ENCODE measurements at regions of chr1 and their contacts with region 1.

Region 1: DNA sequence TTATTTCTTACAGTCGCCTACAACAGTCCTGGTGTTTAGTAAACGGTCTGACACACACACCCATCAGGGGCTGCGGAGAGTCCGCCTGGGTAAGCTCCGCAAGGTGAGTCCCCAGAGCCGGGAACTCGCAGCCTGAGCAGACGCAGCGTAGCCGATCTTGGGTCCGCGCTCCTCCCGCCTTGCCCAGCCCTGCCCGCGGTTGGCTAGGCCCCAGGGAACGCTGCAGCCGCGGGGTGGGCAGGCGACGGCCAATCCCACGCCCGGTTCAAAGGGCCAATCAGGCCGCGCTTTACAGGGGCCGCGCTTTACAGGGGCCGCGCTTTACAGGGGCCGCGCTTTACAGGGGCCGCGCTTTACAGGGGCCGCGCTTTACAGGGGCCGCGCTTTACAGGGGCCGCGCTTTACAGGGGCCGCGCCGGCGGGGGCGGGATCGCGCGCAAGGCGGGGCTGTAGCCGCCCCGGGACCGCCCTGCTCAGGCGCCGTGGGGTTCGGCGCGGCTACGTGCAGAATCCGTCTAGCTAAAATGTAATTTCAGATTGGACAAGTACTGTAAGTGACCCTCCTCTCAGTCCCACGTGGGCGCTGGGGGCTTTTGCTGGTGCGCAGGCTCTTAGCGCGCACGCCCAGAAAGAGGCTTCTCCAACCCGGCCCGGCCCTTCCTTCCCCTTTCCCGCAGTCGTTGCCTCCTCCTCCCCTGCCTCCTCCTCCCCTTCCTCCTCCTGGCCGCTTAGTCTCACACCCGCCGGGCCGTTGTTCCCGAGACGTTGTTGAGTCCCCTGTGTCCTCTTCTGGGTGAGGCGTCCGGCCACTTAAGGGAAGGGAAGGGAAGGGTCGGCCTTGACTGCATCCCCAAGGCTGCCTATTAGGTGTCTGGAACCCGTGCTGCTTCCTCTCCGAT is at the start of gene FGGY:
- DNase-seq: peak; percentile 99
- H3K4me3 ChIP-seq: peak within 1 kb of the TSS; percentile 36 to 81 (median 64)
- H3K27ac ChIP-seq: peak within 1 kb of the TSS; percentile 92
- H3K4me1 ChIP-seq: peaks cover 30% of the 10 kb centered on the region
- H3K27me3 ChIP-seq: no peaks in the 10 kb centered on the region
- CTCF ChIP-seq: no peak
- POLR2A ChIP-seq: peak; percentile 95
- total RNA-seq, gene FGGY: 5.6 and 8.3 TPM in 2 replicates

Region 2: DNA sequence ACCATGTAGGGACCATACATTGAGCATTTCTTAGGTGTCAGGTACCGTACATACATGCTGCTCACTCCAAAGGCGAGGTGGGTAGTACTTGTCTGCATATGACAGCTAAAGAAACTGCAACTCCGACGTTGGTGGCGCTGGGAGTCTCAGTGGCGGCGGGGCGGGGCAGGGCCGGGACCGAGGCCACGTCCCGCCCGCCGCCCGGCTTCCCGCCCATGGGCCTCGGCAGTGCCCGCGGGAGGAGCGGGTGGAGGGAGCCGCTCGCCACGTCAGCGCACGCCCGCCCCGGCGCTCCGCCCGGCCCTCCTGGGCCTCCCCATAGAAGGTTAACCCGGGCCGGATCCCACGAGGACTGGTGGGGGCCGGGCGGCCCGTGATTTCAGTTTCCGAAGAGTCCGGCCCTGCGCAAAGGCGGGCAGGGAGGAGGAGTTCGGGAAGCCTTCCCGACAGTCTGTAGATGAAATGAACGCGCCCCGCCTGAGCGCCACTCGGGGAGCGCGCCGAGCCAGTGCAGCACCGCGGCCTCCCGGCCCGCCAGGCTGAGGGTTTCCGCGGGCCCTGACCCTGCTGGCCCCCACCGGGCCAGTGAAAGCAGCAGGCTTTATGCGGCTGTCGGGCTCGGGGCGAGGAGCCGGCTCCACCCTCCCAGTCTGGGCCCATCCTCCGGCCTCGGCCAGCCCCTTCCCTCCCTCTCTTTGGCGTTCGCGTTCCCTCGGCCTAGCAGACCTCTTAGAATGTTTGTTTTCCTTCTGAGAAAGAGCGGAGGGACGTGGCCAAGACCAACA is 392.9 kb before region 1 on chr1:
- CTCF ChIA-PET with region 1: no interaction called
- POLR2A ChIA-PET with region 1: no interaction called
- dilution Hi-C with region 1: no loop called
- intact Hi-C with region 1: loop called (anchors 2 kb)
- DNase-seq: peak; percentile 94
- H3K4me3 ChIP-seq: peak overlapping the region in 2 of 3 experiments; percentile 24 to 41
- H3K27ac ChIP-seq: peak overlapping the region; percentile 64
- H3K4me1 ChIP-seq: peaks cover 46% of the 10 kb centered on the region
- H3K27me3 ChIP-seq: no peaks in the 10 kb centered on the region
- CTCF ChIP-seq: no peak
- POLR2A ChIP-seq: peak; percentile 95

Region 3: GRCh38 chr1:59061876-59062275 is 234.7 kb before region 1 on chr1:
- CTCF ChIA-PET with region 1: no interaction called
- POLR2A ChIA-PET with region 1: interaction called, 3 read pairs
- dilution Hi-C with region 1: no loop called
- intact Hi-C with region 1: loop called (anchors 5 kb)
- DNase-seq: peak; percentile 94
- H3K4me3 ChIP-seq: peak overlapping the region in 2 of 3 experiments; percentile 1 to 62
- H3K27ac ChIP-seq: peak overlapping the region; percentile 75
- H3K4me1 ChIP-seq: peaks cover 26% of the 10 kb centered on the region
- H3K27me3 ChIP-seq: no peaks in the 10 kb centered on the region
- CTCF ChIP-seq: no peak
- POLR2A ChIP-seq: peak; percentile 47

Region 4: DNA sequence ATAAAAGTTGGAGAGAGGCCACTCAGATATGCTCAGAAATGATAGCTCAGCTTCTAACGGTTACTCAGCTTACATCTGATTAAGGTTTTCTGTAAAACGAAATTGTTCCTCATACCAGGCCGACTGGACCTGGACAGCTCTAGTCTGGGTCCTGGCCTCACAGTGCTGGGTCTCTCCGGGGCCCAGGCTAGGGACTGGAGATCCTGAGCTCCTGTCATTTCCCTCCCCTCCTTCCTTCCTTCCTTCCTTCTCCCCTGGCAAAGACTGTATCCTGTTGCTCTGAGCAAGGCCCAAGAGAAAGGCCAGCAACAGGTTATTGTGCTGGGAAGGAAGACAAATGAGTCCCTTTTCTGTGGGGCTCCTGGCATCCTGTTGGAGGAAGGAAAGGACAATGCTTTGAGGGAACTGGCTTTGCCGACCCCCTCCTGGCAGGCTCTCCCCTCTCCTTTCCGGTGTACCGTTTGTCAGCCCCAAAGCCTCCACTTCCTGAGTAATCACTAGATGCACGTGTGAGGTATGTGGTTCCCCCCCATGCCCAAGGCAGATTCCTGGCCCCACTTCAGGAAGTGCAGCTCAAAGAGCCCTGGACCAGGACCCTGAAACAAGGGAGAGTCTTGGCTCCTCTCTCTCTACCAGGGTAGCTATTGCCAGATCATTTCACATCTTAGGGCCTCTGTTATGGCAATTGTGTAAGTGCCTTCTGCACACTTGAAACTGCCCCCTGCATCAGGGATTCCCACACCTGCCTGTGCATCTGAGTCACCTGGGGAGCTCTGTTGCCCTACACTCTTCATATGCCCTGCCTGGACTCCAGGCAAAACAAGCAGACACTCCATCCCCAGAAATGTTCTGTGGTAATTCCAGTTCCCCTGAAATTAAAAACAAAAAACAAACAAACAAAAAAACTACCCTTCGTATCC is 212.4 kb before region 1 on chr1:
- CTCF ChIA-PET with region 1: interaction called, 3 read pairs
- POLR2A ChIA-PET with region 1: interaction called, 3 read pairs
- dilution Hi-C with region 1: no loop called
- intact Hi-C with region 1: loop called (anchors 1 kb)
- DNase-seq: peak; percentile 67
- H3K4me3 ChIP-seq: no peak overlapping the region
- H3K27ac ChIP-seq: peak overlapping the region; percentile 49
- H3K4me1 ChIP-seq: peaks cover 23% of the 10 kb centered on the region
- H3K27me3 ChIP-seq: no peaks in the 10 kb centered on the region
- CTCF ChIP-seq: no peak
- POLR2A ChIP-seq: peak; percentile 20

Region 5: DNA sequence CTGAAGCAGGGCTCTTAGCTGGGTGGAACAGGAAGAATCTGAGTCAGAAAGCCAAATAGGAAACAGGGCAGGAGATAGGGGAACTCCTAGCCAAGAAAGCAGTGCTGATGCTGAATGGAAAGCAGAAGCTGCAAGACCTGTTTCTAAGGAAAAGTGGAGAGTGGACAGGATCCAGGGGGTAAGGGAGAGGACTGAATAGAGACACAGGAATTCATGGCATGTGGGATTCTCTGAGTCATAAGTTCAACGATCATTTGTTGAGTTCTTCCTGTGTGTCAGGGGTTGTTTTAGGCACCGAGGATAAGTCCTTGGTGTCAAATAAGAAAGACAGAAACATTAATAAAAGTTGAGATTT is 153.5 kb before region 1 on chr1:
- CTCF ChIA-PET with region 1: interaction called, 5 read pairs
- POLR2A ChIA-PET with region 1: no interaction called
- dilution Hi-C with region 1: no loop called
- intact Hi-C with region 1: loop called (anchors 5 kb)
- DNase-seq: peak; percentile 91
- H3K4me3 ChIP-seq: no peak overlapping the region
- H3K27ac ChIP-seq: peak overlapping the region; percentile 82
- H3K4me1 ChIP-seq: peaks cover 43% of the 10 kb centered on the region
- H3K27me3 ChIP-seq: no peaks in the 10 kb centered on the region
- CTCF ChIP-seq: no peak
- POLR2A ChIP-seq: peak; percentile 45

Region 6: DNA sequence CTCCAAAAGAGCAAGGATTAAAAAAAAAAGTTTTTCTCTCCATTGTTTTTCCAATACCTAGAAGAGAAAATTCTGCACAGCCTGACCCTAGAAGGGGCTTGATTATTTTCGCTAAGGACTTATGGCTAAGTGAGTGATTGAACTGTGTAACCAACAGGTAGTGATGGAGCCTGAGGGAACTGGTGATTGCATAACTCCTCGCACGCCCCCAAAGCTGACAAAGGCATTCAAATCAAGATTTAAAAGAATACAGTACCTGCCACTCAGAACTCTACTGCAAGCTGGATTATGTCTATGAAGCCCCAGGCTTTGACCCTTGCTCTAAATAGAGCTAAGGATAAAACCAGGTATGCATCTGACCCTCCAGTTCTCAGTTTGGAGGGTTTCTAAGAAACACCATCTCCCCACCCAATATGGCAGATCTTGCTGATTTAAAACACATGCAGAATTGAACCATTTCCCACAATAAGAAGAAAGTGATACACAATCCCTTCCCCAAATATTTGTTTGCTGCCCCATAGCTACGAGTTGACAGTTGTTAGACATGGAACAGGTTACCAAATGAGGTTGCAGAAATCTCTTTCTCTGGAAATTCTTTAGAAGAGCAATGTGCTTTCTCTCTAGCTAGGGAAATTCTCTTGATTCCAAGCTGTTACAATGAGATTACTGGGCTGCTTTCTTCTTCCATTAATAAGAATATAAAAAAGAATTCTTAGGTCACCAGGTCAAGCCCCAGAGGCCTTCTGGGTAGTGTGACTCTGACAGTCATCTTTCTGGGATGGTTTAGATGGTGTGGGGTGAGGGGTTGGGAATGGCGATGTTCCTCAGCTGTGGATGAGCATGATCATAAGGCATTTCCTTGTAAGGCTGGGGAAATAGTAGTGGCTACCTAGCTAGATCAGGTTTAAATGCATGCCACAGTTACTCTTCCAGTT is 35.3 kb after region 1 on chr1:
- CTCF ChIA-PET with region 1: no interaction called
- POLR2A ChIA-PET with region 1: no interaction called
- dilution Hi-C with region 1: no loop called
- intact Hi-C with region 1: no loop called
- DNase-seq: no peak
- H3K4me3 ChIP-seq: no peak overlapping the region
- H3K27ac ChIP-seq: no peak overlapping the region
- H3K4me1 ChIP-seq: peaks cover 32% of the 10 kb centered on the region
- H3K27me3 ChIP-seq: no peaks in the 10 kb centered on the region
- CTCF ChIP-seq: no peak
- POLR2A ChIP-seq: no peak

Region 7: GRCh38 chr1:59412718-59413326 is 116.2 kb after region 1 on chr1:
- CTCF ChIA-PET with region 1: no interaction called
- POLR2A ChIA-PET with region 1: no interaction called
- dilution Hi-C with region 1: no loop called
- intact Hi-C with region 1: no loop called
- DNase-seq: no peak
- H3K4me3 ChIP-seq: no peak overlapping the region
- H3K27ac ChIP-seq: no peak overlapping the region
- H3K4me1 ChIP-seq: no peaks in the 10 kb centered on the region
- H3K27me3 ChIP-seq: no peaks in the 10 kb centered on the region
- CTCF ChIP-seq: no peak
- POLR2A ChIP-seq: no peak

Region 8: DNA sequence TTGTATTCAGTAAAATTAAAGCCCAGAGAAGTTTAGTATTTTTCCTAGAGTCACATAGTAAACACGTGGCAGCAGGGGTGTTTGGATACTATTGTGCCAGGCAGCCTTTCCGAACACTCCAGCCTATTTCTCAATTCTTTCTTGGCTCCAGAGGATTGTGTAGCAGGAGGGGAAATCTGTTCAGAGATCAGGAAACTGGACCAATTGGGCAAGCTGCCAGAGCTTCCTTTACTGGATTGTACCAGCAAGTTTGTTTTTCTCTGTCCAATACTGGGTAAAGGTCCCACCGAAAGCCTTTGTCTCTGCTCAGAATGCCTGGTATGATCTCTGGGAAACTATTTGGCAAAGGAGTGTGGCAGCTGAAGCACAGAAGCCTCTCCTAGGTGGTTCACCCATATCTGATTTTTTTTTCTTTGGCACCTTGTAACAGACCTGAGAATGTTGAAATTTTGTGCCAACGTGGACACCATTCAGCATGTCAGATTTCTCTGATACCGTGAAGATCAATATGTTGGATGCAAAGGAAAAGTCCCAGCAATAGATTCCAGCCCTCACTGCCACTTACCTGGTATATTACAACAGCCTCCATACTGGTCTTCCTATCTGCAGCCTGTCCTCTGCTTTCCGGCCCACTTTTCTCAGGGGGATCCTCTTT is 126.4 kb after region 1 on chr1:
- CTCF ChIA-PET with region 1: no interaction called
- POLR2A ChIA-PET with region 1: no interaction called
- dilution Hi-C with region 1: no loop called
- intact Hi-C with region 1: loop called (anchors 2 kb)
- DNase-seq: peak; percentile 97
- H3K4me3 ChIP-seq: no peak overlapping the region
- H3K27ac ChIP-seq: peak overlapping the region; percentile 13
- H3K4me1 ChIP-seq: peaks cover 10% of the 10 kb centered on the region
- H3K27me3 ChIP-seq: no peaks in the 10 kb centered on the region
- CTCF ChIP-seq: no peak
- POLR2A ChIP-seq: no peak

Measured in endothelial cell of umbilical vein (primary cell).